Cardiac septum (tissue), 1 donor: ENCODE measurements at regions of chr6 and their contacts with region 1.

Region 1: GRCh38 chr6:13336553-13336952 is 8.2 kb upstream of the TBC1D7 start:
- DNase-seq: peak; percentile 77

Region 2: DNA sequence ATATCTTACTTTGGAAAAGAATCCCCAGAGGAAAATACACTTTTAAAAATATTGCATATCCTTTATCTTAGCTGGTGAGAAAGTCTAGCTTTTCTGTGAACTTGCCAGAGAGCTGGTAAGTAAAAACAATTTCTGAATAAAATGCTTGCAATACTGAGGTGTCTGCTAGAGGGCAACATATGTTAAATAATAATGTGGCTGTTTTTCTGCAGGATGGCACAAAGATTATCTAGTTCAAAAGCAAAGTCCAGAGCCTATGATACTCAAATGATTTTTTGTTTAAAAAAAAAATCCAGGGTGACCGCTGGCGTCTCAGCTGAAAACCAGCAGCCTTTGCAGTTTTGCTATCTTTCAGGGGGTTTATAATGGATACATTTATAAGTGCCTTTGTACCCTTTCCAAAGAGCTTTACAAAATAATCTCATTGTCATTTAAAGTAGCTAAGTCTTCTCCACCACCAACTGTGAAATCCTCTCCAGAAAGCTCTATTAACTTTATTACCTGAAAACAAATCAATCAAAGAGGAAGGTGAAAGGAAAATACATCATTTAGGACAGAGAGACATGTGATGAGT is 425.1 kb before region 1 on chr6:
- intact Hi-C with region 1: loop called (anchors 2 kb)
- DNase-seq: no peak

Region 3: GRCh38 chr6:13422681-13423221 is 86.2 kb after region 1 on chr6:
- intact Hi-C with region 1: loop called (anchors 5 kb)
- DNase-seq: no peak

Region 4: DNA sequence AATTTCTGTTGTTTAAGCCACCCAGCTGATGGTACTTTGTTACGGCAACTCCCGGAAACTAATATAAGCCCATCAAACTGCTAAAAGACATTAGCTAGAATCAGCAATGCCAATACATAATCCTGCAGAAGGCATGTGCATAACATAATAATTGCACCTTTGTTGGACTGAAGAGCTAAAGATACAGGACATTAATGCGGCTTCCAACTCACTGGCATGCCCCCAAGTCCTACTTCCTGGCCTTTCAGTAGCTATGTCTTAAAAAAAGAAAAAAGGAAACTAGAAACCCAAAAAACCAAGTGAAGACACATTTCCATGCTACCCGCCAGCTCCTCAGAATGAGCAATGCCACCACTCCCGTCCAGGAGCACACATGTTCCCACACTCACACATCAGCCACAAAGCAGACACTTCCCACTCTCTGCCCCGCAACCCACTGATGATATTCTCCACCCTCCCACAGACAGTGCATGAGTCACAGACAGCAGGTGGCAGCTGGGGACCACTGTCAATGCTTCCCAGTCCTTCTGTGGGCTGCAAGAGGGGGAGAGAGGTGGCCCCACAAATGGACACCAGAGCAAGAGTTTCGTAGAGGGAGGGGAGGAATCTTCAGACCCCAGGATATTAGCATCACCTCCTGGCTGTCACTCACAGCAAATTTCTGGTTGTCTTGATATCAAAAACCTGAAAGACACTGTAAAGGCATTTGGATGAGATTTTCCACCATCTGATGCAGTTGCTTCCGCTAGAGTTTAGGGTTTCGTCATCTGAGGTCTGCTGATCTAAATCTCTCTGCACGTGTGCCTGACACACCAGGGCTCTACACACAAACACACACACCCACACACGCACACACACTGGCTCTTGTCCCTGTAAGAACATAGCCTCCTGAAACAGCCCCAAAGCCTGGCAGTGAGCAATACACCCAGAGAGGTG is 118.0 kb after region 1 on chr6:
- intact Hi-C with region 1: no loop called
- DNase-seq: peak; percentile 82

Region 5: GRCh38 chr6:13538084-13538483 is 201.5 kb after region 1 on chr6:
- intact Hi-C with region 1: loop called (anchors 1 kb)
- DNase-seq: no peak

Region 6: GRCh38 chr6:13574149-13574570 is 237.6 kb after region 1 on chr6:
- intact Hi-C with region 1: loop called (anchors 2 kb)
- DNase-seq: peak; percentile 95